HAP-1 (cell line): ENCODE measurements at regions of chr9 and their contacts with region 1.

Region 1: GRCh38 chr9:133992780-133993634 is 883 bp upstream of the VAV2 start:
- DNase-seq: peak; percentile 86 to 93
- H3K4me3 ChIP-seq: peak overlapping the region; percentile 79
- H3K4me1 ChIP-seq: peaks cover 6% of the 10 kb centered on the region
- H3K27me3 ChIP-seq: no peaks in the 10 kb centered on the region

Region 2: GRCh38 chr9:133792721-133793470 is 200.1 kb before region 1 on chr9:
- in situ Hi-C with region 1: loop called (anchors 5 kb)
- DNase-seq: peak; percentile 28 to 79
- H3K4me3 ChIP-seq: no peak overlapping the region
- H3K4me1 ChIP-seq: no peaks in the 10 kb centered on the region
- H3K27me3 ChIP-seq: no peaks in the 10 kb centered on the region